ENCODE measurements at regions of chr6 and their contacts with region 1.

Region 1: DNA sequence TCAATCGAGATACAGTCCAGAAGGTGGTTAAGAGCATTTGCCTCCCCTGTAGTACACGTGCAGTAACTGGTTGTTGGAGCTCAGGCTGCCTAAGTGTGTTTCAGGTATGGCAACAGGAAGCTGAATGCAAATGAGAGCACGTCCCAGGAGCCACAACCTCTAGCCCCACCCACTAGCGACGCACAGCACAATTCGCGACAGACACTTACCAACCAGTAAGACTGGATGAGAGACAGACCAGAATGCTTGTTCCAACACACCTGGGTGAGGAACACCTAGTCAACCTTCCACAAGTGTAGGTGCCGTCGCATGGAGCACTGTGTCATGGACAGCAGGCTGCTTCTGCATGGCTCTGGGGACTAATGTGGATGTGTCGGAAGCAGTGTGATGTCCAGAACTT is 7.2 kb upstream of the SERPINB1 start:
- DNase-seq: no peak
- ATAC-seq: peak; percentile 65
- H3K4me3 Mint-ChIP-seq: peak overlapping the region; percentile 33
- H3K27ac Mint-ChIP-seq: peak overlapping the region; percentile 83
- H3K4me1 Mint-ChIP-seq: peaks cover 59% of the 10 kb centered on the region
- H3K27me3 Mint-ChIP-seq: no peaks in the 10 kb centered on the region
- CTCF ChIP-seq: no peak

Region 2: DNA sequence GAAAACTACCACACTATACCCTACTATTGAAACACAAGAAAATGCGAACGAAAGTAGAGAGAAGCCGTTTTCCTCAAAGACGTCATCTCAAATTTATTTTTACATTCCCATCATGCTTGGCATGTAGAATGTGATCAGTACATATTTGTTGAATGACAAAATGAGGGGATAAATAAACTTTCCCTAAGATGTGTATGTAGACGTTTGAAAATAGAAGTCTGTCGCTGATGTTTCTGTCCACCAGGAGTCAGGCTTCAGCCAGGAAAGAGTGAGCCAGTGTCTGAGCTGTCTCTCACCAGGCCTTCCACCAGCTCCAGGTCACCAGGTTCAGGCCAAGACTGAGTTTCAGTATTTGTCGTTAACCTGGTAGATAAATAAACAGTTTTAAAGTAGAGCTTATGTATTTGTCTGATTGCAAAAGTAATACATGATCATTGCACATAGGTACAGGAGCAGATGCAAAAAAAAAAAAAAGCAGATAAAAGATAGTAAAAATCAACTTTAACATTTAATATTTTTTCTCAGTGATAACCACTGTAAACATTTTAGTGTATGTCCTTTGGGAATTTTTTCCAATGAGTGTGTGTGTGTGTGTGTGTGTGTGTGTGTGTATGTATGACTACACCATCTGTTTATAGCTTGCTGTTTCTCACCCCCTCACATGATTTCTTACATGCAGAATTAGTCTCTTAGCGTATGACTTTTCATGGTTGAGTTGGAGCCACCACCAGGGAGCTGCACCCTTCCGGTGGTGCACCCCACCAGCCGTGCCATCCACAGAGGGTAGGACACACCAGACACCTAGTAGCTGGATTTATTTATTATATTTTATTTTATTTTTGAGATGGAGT is 57.5 kb before region 1 on chr6:
- CTCF ChIA-PET with region 1: interaction called, 45 read pairs
- POLR2A ChIA-PET with region 1: interaction called, 13 read pairs
- intact Hi-C with region 1: loop called (anchors 1 kb)
- DNase-seq: no peak
- ATAC-seq: peak; percentile 91
- H3K4me3 Mint-ChIP-seq: peak overlapping the region; percentile 72
- H3K27ac Mint-ChIP-seq: peak overlapping the region; percentile 67
- H3K4me1 Mint-ChIP-seq: peaks cover 41% of the 10 kb centered on the region
- H3K27me3 Mint-ChIP-seq: no peaks in the 10 kb centered on the region
- CTCF ChIP-seq: no peak

Region 3: GRCh38 chr6:2876210-2877056 is 27.6 kb after region 1 on chr6:
- CTCF ChIA-PET with region 1: interaction called, 25 read pairs
- POLR2A ChIA-PET with region 1: interaction called, 13 read pairs
- intact Hi-C with region 1: no loop called
- DNase-seq: no peak
- ATAC-seq: peak; percentile 23
- H3K4me3 Mint-ChIP-seq: peak overlapping the region; percentile 88
- H3K27ac Mint-ChIP-seq: peak overlapping the region; percentile 99
- H3K4me1 Mint-ChIP-seq: peaks cover 85% of the 10 kb centered on the region
- H3K27me3 Mint-ChIP-seq: no peaks in the 10 kb centered on the region
- CTCF ChIP-seq: no peak

Region 4: DNA sequence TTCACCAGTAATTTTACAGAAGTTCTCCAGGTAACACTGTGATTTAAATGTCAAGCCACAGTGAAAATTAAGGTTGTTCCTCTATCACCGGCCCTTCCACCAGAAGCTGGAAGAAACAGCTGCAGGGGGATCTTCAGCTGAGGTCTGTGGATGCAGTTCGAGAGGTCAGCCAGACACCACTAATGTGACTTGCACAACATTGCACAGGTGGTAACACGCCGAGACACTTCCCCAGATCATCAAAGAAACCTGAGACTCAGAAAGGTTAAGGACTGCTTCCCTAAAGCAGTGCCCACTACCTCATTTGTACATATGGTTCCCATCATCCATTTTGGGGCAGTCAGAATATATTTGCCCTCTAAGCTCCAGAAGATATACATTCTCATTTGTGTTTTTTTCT is 62.3 kb after region 1 on chr6:
- CTCF ChIA-PET with region 1: interaction called, 100 read pairs
- POLR2A ChIA-PET with region 1: interaction called, 39 read pairs
- intact Hi-C with region 1: loop called (anchors 1 kb)
- DNase-seq: no peak
- ATAC-seq: peak; percentile 80
- H3K4me3 Mint-ChIP-seq: peak overlapping the region; percentile 51
- H3K27ac Mint-ChIP-seq: peak overlapping the region; percentile 88
- H3K4me1 Mint-ChIP-seq: peaks cover 43% of the 10 kb centered on the region
- H3K27me3 Mint-ChIP-seq: no peaks in the 10 kb centered on the region
- CTCF ChIP-seq: no peak

Region 5: DNA sequence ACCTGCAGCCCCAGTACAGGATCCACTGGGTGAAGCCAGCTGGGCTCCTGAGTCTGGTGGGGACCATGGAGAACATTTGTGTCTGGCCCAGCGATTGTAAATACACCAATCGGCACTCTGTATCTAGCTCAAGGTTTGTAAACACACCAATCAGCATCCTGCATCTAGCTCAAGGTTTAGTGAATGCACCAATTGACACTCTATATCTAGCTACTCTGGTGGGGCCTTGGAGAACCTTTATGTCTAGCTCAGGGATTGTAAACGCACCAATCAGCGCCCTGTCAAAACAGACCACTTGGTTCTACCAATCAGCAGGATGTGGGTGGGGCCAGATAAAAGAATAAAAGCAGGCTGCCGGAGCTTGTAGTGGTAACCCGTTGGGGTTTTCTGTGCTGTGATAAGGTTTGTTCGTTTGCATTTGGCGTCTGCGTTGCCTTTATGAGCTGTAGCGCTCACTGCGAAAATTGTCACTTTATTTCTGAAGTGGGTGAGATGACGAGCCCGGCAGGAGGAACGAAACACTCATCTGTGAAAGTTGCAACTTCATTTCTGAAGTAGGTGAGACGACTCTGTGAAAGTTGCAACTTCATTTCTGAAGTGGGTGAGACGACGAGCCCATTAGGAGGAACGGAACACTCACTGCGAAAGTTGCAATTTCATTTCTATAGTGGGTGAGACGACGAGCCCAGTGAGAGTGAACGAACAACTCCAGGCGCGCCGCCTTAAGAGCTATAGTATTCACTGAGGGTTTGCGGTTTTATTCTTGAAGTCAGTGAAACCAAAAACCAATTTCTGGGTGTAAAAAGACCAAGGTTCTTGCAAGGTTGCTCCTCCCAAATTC is 91.4 kb after region 1 on chr6:
- CTCF ChIA-PET with region 1: interaction called, 177 read pairs
- POLR2A ChIA-PET with region 1: interaction called, 11 read pairs
- intact Hi-C with region 1: no loop called
- DNase-seq: peak; percentile 39
- ATAC-seq: peak; percentile 81
- H3K4me3 Mint-ChIP-seq: peak overlapping the region; percentile 82
- H3K27ac Mint-ChIP-seq: peak overlapping the region; percentile 94
- H3K4me1 Mint-ChIP-seq: peaks cover 69% of the 10 kb centered on the region
- H3K27me3 Mint-ChIP-seq: no peaks in the 10 kb centered on the region
- CTCF ChIP-seq: no peak

Region 6: GRCh38 chr6:3887150-3887700 is 1038.4 kb after region 1 on chr6:
- CTCF ChIA-PET with region 1: no interaction called
- POLR2A ChIA-PET with region 1: no interaction called
- intact Hi-C with region 1: no loop called
- DNase-seq: no peak
- ATAC-seq: no peak
- H3K4me3 Mint-ChIP-seq: no peak overlapping the region
- H3K27ac Mint-ChIP-seq: no peak overlapping the region
- H3K4me1 Mint-ChIP-seq: no peaks in the 10 kb centered on the region
- H3K27me3 Mint-ChIP-seq: peaks cover 9% of the 10 kb centered on the region
- CTCF ChIP-seq: no peak

Measured in activated B cell treated with CpG ODN at 0.5 μM for 24 hours (primary cell).